B cell (primary cell): ENCODE measurements at regions of chr10 and their contacts with region 1.

Region 1: DNA sequence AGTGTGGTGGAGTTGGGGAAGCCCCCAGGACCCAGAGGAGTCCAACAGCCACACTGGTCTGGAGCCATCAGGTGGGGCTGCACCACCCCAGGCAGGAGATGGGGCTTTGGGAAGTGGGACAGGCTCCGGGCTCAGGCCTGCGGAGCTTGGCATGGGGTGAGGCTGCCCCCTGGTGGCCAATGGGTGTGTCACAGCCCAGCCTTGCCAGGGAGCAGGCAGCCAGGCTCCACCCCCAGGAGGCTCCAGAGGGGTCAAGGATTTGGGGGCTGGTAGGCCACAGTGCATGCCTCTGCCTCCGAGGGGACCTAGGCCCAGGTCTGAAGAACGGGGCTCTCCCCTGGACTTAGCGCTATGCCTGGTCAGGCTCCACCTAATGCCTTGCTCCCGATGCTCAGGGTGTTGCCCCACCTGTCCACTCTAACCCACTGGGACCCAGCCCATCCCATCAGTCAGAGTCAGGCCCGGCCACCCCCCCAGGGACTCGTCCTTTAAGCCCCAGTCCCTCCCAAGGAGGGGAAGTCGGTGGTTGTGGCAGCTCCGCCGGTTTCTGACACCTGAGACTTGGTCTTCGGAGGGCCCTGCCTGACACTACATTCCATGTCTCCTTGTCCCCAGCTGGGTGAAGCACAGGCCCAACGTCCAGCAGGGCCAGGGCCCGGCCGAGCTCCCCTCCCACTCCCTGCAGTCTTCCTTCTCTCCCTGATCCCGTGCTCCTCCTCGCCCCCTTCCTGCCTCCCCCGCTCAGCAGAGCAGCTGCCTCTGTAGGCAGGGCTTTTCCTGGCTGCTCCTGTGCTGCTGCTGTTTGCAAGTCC is 11.3 kb upstream of the SAMD8 start:
- DNase-seq: peak; percentile 83
- ATAC-seq: peak; percentile 98
- H3K4me3 ChIP-seq: no peak overlapping the region
- H3K4me3 Mint-ChIP-seq: no peak overlapping the region
- H3K27ac ChIP-seq: no peak overlapping the region
- H3K27ac Mint-ChIP-seq: no peak overlapping the region
- H3K4me1 ChIP-seq: peaks cover 0 to 7% of the 10 kb centered on the region in 2 donors
- H3K4me1 Mint-ChIP-seq: no peaks in the 10 kb centered on the region
- H3K27me3 ChIP-seq: no peaks in the 10 kb centered on the region
- H3K27me3 Mint-ChIP-seq: no peaks in the 10 kb centered on the region
- CTCF ChIP-seq: peak; percentile 100

Region 2: GRCh38 chr10:74244097-74244685 is 856.0 kb before region 1 on chr10:
- CTCF ChIA-PET with region 1: interaction called, 103 read pairs
- POLR2A ChIA-PET with region 1: no interaction called
- intact Hi-C with region 1: loop called (anchors 1 kb)
- DNase-seq: peak; percentile 51
- ATAC-seq: no peak
- H3K4me3 ChIP-seq: no peak overlapping the region
- H3K4me3 Mint-ChIP-seq: no peak overlapping the region
- H3K27ac ChIP-seq: no peak overlapping the region
- H3K27ac Mint-ChIP-seq: no peak overlapping the region
- H3K4me1 ChIP-seq: no peaks in the 10 kb centered on the region
- H3K4me1 Mint-ChIP-seq: peaks cover 4% of the 10 kb centered on the region
- H3K27me3 ChIP-seq: no peaks in the 10 kb centered on the region
- H3K27me3 Mint-ChIP-seq: no peaks in the 10 kb centered on the region
- CTCF ChIP-seq: peak; percentile 78

Region 3: DNA sequence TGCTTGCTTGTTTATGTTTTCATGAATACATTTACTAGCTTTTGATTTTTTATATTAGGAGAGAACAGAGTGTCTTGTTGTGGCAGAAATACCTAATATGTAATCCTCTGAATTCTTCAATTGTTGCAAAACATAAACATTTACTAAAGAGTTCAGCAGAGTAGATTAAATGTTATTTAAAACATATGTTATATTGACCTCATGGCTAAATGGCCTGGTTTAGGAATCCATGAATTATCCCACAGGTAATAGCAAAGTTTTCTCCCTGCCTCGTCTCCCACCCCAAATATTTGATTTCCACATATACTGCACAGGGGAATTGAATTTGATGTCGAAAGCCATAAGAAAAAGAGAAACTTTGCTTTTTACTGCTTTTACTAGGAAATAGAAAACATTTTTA is 837.3 kb before region 1 on chr10:
- CTCF ChIA-PET with region 1: interaction called, 47 read pairs
- POLR2A ChIA-PET with region 1: no interaction called
- intact Hi-C with region 1: loop called (anchors 1 kb)
- DNase-seq: no peak
- ATAC-seq: no peak
- H3K4me3 ChIP-seq: no peak overlapping the region
- H3K4me3 Mint-ChIP-seq: no peak overlapping the region
- H3K27ac ChIP-seq: no peak overlapping the region
- H3K27ac Mint-ChIP-seq: peak overlapping the region; percentile 4
- H3K4me1 ChIP-seq: peaks cover 0 to 9% of the 10 kb centered on the region in 2 donors
- H3K4me1 Mint-ChIP-seq: peaks cover 20% of the 10 kb centered on the region
- H3K27me3 ChIP-seq: no peaks in the 10 kb centered on the region
- H3K27me3 Mint-ChIP-seq: no peaks in the 10 kb centered on the region
- CTCF ChIP-seq: no peak

Region 4: DNA sequence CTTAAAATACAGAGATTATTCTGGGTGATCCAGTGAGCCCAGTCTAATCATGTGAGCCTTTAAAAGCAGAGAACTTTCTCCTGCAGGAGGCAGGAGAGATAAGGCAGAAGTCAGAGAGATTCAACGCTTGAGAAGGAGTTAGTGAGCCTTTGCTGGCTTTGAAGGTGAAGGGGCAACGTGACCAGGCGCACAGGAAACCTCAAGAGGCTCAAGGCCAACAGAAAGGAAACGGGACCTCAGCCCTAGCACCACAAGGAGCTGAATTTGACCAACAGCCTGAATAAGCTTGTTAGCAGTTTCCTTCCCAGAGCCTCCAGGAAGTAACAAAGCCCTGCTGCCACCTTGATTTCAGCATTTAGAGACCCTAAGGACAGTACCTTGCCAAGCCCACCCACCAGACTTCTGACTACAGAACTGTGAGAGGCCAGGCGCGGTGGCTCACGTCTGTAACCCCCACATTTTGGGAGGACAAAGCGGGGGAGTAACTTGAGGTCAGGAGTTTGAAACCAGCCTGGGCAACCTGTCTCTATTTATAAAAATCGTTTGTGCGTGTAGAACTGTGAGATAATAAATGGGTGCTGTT is 361.1 kb before region 1 on chr10:
- CTCF ChIA-PET with region 1: interaction called, 9 read pairs
- POLR2A ChIA-PET with region 1: no interaction called
- intact Hi-C with region 1: loop called (anchors 10 kb)
- DNase-seq: peak; percentile 64
- ATAC-seq: peak; percentile 69
- H3K4me3 ChIP-seq: peak overlapping the region in 3 of 5 experiments; percentile 10 to 33 (median 25)
- H3K4me3 Mint-ChIP-seq: peak overlapping the region; percentile 66
- H3K27ac ChIP-seq: peak overlapping the region; percentile 15 to 37
- H3K27ac Mint-ChIP-seq: peak overlapping the region; percentile 75
- H3K4me1 ChIP-seq: peaks cover 21 to 23% of the 10 kb centered on the region in 2 donors
- H3K4me1 Mint-ChIP-seq: peaks cover 25% of the 10 kb centered on the region
- H3K27me3 ChIP-seq: no peaks in the 10 kb centered on the region
- H3K27me3 Mint-ChIP-seq: no peaks in the 10 kb centered on the region
- CTCF ChIP-seq: peak; percentile 54

Region 5: GRCh38 chr10:75117995-75118394 is 17.8 kb after region 1 on chr10:
- CTCF ChIA-PET with region 1: no interaction called
- POLR2A ChIA-PET with region 1: no interaction called
- intact Hi-C with region 1: no loop called
- DNase-seq: no peak
- ATAC-seq: no peak
- H3K4me3 ChIP-seq: no peak overlapping the region
- H3K4me3 Mint-ChIP-seq: no peak overlapping the region
- H3K27ac ChIP-seq: no peak overlapping the region
- H3K27ac Mint-ChIP-seq: no peak overlapping the region
- H3K4me1 ChIP-seq: peaks cover 18 to 29% of the 10 kb centered on the region in 2 donors
- H3K4me1 Mint-ChIP-seq: peaks cover 54% of the 10 kb centered on the region
- H3K27me3 ChIP-seq: no peaks in the 10 kb centered on the region
- H3K27me3 Mint-ChIP-seq: no peaks in the 10 kb centered on the region
- CTCF ChIP-seq: no peak